Aorta (tissue), 5 donors: ENCODE measurements at regions of chrX and their contacts with region 1.

Region 1: DNA sequence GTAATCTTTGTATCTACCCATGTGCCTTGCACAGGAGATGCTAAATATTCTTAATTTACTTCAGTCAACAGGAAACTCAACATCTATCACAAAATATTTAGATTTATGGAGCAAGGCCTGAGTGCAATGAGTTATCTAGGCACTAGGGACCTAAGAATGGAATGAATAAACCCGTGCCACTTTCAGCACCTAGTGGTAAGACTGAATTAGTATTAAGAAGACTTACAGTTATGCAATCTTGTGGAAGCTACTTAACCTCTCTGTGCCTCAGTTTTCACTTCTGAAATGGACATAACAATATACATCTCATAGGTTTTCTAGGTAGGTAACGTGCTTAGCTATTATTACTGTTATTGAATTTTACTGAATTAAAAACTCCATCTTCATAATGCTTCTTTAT is 144.6 kb upstream of the MAP3K15 start:
- DNase-seq: no peak
- ATAC-seq: no peak
- H3K4me3 ChIP-seq: no peak overlapping the region
- H3K27ac ChIP-seq: no peak overlapping the region
- H3K4me1 ChIP-seq: no peaks in the 10 kb centered on the region
- H3K27me3 ChIP-seq: no peaks in the 10 kb centered on the region

Region 2: GRCh38 chrX:19602866-19603622 is 56.9 kb before region 1 on chrX:
- intact Hi-C with region 1: loop called in 1 of 2 experiments (anchors 10 kb)
- DNase-seq: no peak
- ATAC-seq: no peak
- H3K4me3 ChIP-seq: no peak overlapping the region
- H3K27ac ChIP-seq: no peak overlapping the region
- H3K4me1 ChIP-seq: no peaks in the 10 kb centered on the region
- H3K27me3 ChIP-seq: no peaks in the 10 kb centered on the region